Endothelial cell of umbilical vein (primary cell): ENCODE measurements at regions of chr1 and their contacts with region 1.

Region 1: GRCh38 chr1:113835642-113836307 is 23.5 kb upstream of the RSBN1 start:
- DNase-seq: peak; percentile 72
- H3K4me3 ChIP-seq: no peak overlapping the region
- H3K27ac ChIP-seq: no peak overlapping the region
- H3K4me1 ChIP-seq: no peaks in the 10 kb centered on the region
- H3K27me3 ChIP-seq: no peaks in the 10 kb centered on the region
- CTCF ChIP-seq: peak; percentile 11 to 12
- POLR2A ChIP-seq: no peak

Region 2: GRCh38 chr1:113660088-113660487 is 175.7 kb before region 1 on chr1:
- CTCF ChIA-PET with region 1: no interaction called
- POLR2A ChIA-PET with region 1: no interaction called
- dilution Hi-C with region 1: no loop called
- intact Hi-C with region 1: no loop called
- DNase-seq: peak; percentile 26
- H3K4me3 ChIP-seq: no peak overlapping the region
- H3K27ac ChIP-seq: no peak overlapping the region
- H3K4me1 ChIP-seq: peaks cover 15% of the 10 kb centered on the region
- H3K27me3 ChIP-seq: no peaks in the 10 kb centered on the region
- CTCF ChIP-seq: no peak
- POLR2A ChIP-seq: no peak

Region 3: GRCh38 chr1:113747376-113747775 is 88.4 kb before region 1 on chr1:
- CTCF ChIA-PET with region 1: no interaction called
- POLR2A ChIA-PET with region 1: no interaction called
- dilution Hi-C with region 1: no loop called
- intact Hi-C with region 1: no loop called
- DNase-seq: no peak
- H3K4me3 ChIP-seq: no peak overlapping the region
- H3K27ac ChIP-seq: no peak overlapping the region
- H3K4me1 ChIP-seq: no peaks in the 10 kb centered on the region
- H3K27me3 ChIP-seq: no peaks in the 10 kb centered on the region
- CTCF ChIP-seq: no peak
- POLR2A ChIP-seq: no peak

Region 4: DNA sequence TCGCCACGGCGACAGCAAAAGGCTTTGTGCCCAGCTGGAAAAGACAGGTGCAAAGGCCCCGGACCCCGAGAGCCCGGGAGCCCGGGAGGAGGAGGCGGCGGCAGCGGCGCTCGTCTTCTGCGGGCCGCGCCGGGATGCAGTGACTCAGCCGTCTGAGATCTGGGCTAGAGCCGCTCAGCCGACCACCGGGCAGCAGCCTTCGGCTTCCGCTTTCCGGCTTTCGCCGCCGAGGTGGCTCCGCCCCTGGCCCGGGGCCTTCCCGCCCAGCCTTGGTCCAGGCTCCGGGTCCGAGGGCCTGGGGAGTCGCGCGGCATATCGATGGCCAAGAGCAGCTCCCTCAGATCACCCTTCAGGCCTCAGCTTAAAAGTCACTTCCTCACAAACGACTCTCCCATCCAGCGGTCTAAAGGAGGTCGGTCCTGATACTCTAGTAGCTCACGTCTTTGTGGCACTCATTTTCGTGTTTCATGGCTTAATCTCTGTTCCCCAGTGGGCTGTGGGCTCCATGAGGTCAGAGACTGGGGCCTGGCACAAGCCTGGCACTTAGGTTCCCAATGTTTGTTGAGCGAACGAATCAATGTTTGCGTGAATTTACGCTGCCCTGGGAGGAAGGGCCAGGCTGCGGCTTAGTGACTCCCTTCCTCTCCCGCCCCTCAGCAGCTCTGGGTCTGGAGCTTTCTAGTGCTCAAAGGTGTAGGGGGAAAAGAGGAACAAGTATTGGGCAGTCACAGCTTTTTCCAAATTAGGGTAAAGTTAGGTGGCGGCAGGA is 76.3 kb before region 1 on chr1 and contains the start of gene PHTF1:
- CTCF ChIA-PET with region 1: no interaction called
- POLR2A ChIA-PET with region 1: no interaction called
- dilution Hi-C with region 1: no loop called
- intact Hi-C with region 1: no loop called
- DNase-seq: peak; percentile 82
- H3K4me3 ChIP-seq: peak within 1 kb of the TSS; percentile 83 to 100 (median 96)
- H3K27ac ChIP-seq: peak within 1 kb of the TSS; percentile 92
- H3K4me1 ChIP-seq: peaks cover 22% of the 10 kb centered on the region
- H3K27me3 ChIP-seq: no peaks in the 10 kb centered on the region
- CTCF ChIP-seq: no peak
- POLR2A ChIP-seq: peak; percentile 98
- total RNA-seq, gene PHTF1: 62.6 and 68.7 TPM in 2 replicates

Region 5: DNA sequence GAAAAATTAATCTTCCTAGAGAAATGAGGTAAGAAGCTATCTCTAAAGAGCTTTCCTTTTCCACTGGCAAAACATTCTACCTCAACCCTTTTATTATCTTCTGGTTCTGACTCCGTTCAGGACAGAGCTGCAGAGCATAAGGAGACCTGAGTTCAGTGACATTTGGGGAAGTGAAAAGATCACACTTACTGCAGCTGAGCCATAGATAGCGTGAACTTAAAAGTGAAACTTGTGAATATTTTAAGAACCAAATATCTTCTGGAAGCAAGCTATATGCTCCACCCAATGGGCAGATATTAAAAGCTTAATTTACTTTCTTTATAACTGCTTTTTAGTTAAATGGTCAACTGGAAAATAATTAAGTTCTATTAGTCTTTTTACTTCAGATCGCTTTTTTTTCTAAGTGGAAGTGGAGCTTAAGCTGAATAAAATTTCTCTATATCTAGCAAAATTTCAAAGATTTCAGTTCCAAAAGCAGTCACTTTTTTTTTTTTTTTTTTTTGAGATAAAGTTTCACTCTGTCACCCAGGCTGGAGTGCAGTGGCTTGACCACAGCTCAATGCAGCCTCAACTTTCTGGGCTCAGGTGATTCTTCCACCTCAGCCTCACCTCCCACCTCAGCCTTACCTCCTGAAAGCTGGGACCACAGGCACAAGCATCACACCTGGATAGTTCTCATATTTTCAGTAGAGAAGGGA is 23.9 kb after region 1 on chr1:
- CTCF ChIA-PET with region 1: interaction called, 24 read pairs
- POLR2A ChIA-PET with region 1: no interaction called
- dilution Hi-C with region 1: no loop called
- intact Hi-C with region 1: no loop called
- DNase-seq: no peak
- H3K4me3 ChIP-seq: no peak overlapping the region
- H3K27ac ChIP-seq: peak overlapping the region; percentile 74
- H3K4me1 ChIP-seq: peaks cover 14% of the 10 kb centered on the region
- H3K27me3 ChIP-seq: no peaks in the 10 kb centered on the region
- CTCF ChIP-seq: no peak
- POLR2A ChIP-seq: no peak

Region 6: GRCh38 chr1:113895098-113895497 is 59.3 kb after region 1 on chr1:
- CTCF ChIA-PET with region 1: interaction called, 11 read pairs
- POLR2A ChIA-PET with region 1: no interaction called
- dilution Hi-C with region 1: no loop called
- intact Hi-C with region 1: no loop called
- DNase-seq: no peak
- H3K4me3 ChIP-seq: no peak overlapping the region
- H3K27ac ChIP-seq: no peak overlapping the region
- H3K4me1 ChIP-seq: peaks cover 5% of the 10 kb centered on the region
- H3K27me3 ChIP-seq: no peaks in the 10 kb centered on the region
- CTCF ChIP-seq: no peak
- POLR2A ChIP-seq: no peak

Region 7: GRCh38 chr1:113928941-113929749 is 93.4 kb after region 1 on chr1 and contains the start of gene HIPK1:
- CTCF ChIA-PET with region 1: interaction called, 54 read pairs
- POLR2A ChIA-PET with region 1: no interaction called
- dilution Hi-C with region 1: no loop called
- intact Hi-C with region 1: no loop called
- DNase-seq: peak; percentile 90
- H3K4me3 ChIP-seq: peak within 1 kb of the TSS; percentile 63 to 73 (median 65)
- H3K27ac ChIP-seq: peak within 1 kb of the TSS; percentile 89
- H3K4me1 ChIP-seq: peaks cover 26% of the 10 kb centered on the region
- H3K27me3 ChIP-seq: peaks cover 0 to under 1% of the 10 kb centered on the region in 2 experiments
- CTCF ChIP-seq: no peak
- POLR2A ChIP-seq: peak; percentile 91
- total RNA-seq, gene HIPK1: 50.2 and 56.1 TPM in 2 replicates

Region 8: DNA sequence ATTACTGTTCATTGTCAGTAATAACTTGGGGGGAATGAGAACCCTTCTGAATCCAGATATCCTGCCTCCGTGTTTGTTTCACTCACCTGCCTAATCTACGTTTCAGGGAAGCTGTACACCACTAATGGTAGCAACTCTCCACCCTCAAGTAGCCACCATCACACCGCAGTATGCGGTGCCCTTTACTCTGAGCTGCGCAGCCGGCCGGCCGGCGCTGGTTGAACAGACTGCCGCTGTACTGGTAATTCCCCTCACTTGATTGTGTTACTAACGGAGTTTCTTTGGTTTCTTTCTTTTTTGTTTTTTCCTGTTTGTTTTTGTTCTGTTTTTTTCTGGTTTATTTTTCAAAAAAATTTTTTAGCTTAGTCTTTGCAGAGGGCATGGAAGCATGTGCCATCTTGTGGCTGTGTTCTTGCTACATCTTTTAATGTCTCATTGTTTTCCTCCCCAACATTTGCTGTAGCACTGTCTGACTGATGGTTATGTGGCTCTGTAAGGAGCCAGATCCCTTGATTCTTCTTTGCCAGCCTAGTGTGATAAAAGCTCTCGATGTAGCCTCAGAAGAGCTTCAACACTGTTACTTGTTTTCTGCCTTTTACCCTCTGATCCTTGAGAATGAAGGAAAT is 127.6 kb after region 1 on chr1:
- CTCF ChIA-PET with region 1: interaction called, 36 read pairs
- POLR2A ChIA-PET with region 1: no interaction called
- dilution Hi-C with region 1: no loop called
- intact Hi-C with region 1: loop called (anchors 5 kb)
- DNase-seq: no peak
- H3K4me3 ChIP-seq: no peak overlapping the region
- H3K27ac ChIP-seq: no peak overlapping the region
- H3K4me1 ChIP-seq: no peaks in the 10 kb centered on the region
- H3K27me3 ChIP-seq: no peaks in the 10 kb centered on the region
- CTCF ChIP-seq: no peak
- POLR2A ChIP-seq: no peak